Motor neuron (in vitro differentiated cells): ENCODE measurements at regions of chr17 and their contacts with region 1.

Region 1: DNA sequence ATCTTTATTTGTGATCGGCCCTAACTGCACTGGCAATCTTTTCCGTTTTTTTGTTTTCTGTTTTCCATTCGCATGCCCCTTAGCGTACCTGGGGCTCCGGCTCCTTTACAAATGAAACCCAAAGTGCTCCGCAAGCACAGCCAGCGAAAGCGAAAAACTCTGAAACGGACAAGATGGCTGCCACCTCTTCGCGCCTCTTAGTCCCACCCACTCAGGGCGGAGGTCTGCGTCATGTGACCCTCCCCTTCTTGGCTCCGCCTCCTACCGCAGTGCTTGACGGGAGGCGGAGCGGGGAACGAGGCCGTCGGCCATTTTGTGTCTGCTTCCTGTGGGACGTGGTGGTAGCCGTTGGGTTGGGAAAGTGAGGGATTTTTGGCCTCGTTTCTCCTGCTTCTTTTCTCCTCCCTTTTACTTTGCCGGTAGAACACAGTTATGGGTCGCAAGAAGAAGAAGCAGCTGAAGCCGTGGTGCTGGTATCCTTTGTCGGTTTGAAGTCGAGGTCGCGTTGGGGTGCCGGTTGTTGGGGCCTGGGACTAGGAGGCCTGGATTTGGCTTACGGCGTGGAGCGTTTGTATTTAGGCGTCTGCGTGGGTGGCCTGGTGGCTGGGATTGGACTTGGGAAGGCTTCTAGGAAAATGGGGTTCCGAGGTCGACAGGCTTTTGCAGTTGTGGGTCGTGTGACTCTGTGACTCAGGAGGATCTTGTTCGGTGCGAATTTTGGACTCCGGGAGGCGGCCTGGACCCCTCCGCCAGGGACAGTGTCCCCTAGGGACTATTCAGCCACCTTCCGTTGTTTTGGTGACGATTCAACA is at the start of gene ZNF207:
- ATAC-seq: peak; percentile 88 to 97 (median 96)
- H3K4me3 ChIP-seq: peak within 1 kb of the TSS; percentile 68 to 91 (median 74)
- H3K27ac ChIP-seq: peak within 1 kb of the TSS; percentile 98 to 99
- H3K4me1 ChIP-seq: peaks cover 18 to 22% of the 10 kb centered on the region in 2 donors
- total RNA-seq, gene ZNF207: 83.6 to 304 (median 143) TPM

Region 2: DNA sequence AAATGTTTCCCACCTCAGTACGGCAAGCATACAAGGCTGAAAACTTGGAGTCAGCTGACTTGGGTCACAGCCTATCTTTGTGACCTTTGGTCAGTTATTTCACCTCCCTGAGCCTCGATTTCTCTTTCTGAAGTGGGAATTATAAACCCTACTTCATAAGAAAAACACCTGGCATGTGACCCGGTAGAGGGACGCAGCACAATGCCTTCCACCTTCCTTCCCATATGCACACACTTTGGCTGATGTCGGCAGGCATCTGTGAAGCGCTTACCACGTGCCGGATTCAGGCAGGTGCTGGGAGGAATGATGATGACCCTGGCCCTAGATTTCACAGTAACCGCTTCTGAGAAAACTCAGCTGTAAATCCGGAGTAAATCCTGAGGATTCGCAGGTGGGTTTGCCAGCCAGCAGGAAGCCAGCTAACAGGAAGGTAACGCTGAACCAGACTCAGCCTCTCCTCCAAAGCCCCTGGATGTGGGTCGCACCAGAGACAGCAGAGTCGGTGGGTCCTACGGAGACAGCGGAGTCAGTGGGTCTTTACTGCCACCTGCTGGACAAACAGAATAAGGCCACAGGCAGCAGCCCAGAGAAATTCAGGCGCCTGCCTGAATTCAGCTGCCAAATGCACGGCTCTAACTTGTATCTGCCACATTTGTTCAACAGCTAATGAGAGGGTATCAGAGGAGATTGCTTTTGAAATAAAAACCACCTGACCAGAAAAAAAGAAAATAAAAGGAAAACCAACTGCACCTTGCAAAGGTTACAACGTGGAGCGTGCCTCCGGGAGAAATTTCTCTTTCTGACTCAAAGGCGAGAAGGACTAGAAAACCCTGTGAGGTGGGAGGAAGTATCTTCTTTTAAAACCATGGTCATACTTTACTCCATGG is 507.6 kb before region 1 on chr17:
- in situ Hi-C with region 1: no loop called
- ATAC-seq: peak; percentile 91 to 99 (median 98)
- H3K4me3 ChIP-seq: peak overlapping the region in 1 of 5 donors; percentile 2
- H3K27ac ChIP-seq: no peak overlapping the region
- H3K4me1 ChIP-seq: peaks cover 0 to 3% of the 10 kb centered on the region in 2 donors

Region 3: GRCh38 chr17:32240750-32241149 is 109.3 kb before region 1 on chr17:
- in situ Hi-C with region 1: loop called in 1 of 9 experiments (anchors 25 kb)
- ATAC-seq: peak in 2 of 8 experiments; percentile 49 to 61
- H3K4me3 ChIP-seq: no peak overlapping the region
- H3K27ac ChIP-seq: no peak overlapping the region
- H3K4me1 ChIP-seq: peaks cover 11 to 17% of the 10 kb centered on the region in 2 donors